Uterus (tissue), 4 donors: ENCODE measurements at regions of chr2 and their contacts with region 1.

Region 1: DNA sequence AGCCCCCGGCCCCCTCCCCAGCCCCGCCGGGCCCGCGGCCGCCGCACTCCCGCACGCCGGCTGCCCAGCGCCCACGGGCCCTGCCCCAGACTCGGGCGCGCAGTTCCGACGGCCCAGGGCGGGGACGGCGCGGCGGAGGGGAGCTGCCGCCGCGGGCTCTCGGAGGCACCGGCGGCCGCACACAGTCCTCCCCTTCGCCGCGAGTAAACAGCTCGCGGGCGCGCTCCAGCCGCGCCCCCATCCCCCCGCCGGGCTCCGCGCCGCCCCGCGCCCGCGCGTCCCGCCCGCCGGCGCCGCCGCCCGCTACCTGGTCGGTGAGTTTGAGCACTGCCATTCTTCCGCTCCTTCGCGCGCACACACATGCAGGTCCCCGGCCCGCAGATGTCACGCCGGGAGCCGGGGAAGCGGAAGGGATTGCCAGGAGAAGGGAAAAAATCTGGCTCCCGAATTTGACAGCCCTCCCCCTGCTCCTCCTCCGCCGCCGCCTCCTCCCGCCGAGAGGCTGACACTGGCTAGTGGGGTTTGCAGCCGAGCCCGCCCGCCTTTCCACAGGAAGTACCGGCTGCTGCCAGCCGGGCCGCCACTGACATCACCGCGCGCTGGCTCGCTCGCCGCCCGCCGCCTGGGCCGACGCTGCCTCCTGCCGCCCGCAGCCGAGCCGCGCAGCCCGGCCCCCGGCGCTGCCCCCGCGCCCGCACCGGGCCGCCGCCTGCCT is at the start of gene ANKRD44:
- DNase-seq: peak; percentile 88
- H3K4me3 ChIP-seq: peak within 1 kb of the TSS; percentile 55 to 74
- H3K27ac ChIP-seq: peak within 1 kb of the TSS; percentile 84 to 90
- H3K4me1 ChIP-seq: peaks cover 0 to 3% of the 10 kb centered on the region in 2 donors
- H3K27me3 ChIP-seq: no peaks in the 10 kb centered on the region
- CTCF ChIP-seq: peak in 3 of 4 experiments; percentile 56 to 95 (median 89)
- POLR2A ChIP-seq: peak; percentile 69 to 76
- total RNA-seq, gene ANKRD44: 14.4 to 71.5 (median 23.2) TPM

Region 2: DNA sequence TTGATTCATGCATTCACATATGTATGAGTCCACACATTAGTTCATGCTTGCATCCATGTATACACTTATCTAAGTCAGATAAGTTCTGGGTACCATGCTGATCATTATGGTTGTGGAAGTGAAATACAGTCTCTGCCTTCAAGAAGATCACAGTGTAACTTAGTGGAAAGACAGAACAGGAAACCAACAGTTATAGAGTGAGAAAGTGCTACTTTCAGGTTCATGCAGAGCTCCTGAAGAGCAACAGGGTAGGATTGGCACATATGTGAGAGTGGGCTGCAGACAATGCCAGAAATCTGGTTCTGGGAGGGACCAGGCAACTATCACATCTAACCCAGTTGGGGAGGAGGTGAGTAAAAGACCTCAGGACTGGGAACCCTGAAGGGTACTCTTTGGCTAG is 348.5 kb before region 1 on chr2:
- intact Hi-C with region 1: no loop called
- DNase-seq: no peak
- H3K4me3 ChIP-seq: no peak overlapping the region
- H3K27ac ChIP-seq: no peak overlapping the region
- H3K4me1 ChIP-seq: no peaks in the 10 kb centered on the region
- H3K27me3 ChIP-seq: no peaks in the 10 kb centered on the region
- CTCF ChIP-seq: no peak
- POLR2A ChIP-seq: no peak

Region 3: GRCh38 chr2:197113275-197113711 is 197.1 kb before region 1 on chr2:
- intact Hi-C with region 1: loop called (anchors 10 kb)
- DNase-seq: no peak
- H3K4me3 ChIP-seq: no peak overlapping the region
- H3K27ac ChIP-seq: no peak overlapping the region
- H3K4me1 ChIP-seq: peaks cover 0 to 4% of the 10 kb centered on the region in 2 donors
- H3K27me3 ChIP-seq: no peaks in the 10 kb centered on the region
- CTCF ChIP-seq: peak; percentile 45 to 59 (median 53)
- POLR2A ChIP-seq: no peak

Region 4: GRCh38 chr2:197124639-197125390 is 185.6 kb before region 1 on chr2:
- intact Hi-C with region 1: no loop called
- DNase-seq: no peak
- H3K4me3 ChIP-seq: no peak overlapping the region
- H3K27ac ChIP-seq: no peak overlapping the region
- H3K4me1 ChIP-seq: no peaks in the 10 kb centered on the region
- H3K27me3 ChIP-seq: no peaks in the 10 kb centered on the region
- CTCF ChIP-seq: no peak
- POLR2A ChIP-seq: no peak

Region 5: DNA sequence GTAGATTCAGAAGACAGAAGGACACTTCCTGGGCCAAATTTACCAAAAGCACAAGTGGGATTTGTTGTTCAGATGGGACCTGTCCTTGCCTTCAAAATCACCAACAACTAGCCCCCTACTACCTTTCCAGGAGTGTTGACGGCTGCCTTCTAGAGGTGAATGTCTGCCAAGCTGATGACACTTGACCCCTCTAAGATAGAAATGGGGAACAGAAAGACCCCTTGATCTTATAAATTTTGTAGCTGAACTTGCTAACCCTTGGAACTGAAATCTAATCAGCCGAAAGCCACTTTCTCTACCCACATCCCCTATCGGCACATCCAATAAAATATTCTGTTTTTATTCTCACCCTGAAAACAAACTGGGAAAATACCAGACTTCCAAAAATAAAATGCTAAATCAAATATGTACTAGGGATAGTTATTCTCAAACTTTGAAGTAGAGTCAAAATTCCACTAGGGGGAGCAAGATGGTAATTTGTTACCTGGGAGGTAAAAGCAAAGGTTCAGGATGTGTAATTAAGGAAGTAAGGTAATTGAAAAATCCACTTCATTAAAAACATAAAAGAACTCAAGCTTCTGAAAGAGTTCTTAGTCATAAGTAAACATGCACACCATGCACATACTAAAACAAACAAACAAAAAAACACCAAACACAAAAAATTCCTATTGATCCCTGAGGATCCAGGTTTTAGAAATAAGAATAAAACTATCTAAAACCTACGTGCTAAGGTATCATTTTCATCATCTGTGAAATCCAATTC is 119.1 kb before region 1 on chr2:
- intact Hi-C with region 1: loop called (anchors 10 kb)
- DNase-seq: no peak
- H3K4me3 ChIP-seq: no peak overlapping the region
- H3K27ac ChIP-seq: no peak overlapping the region
- H3K4me1 ChIP-seq: peaks cover 0 to 7% of the 10 kb centered on the region in 2 donors
- H3K27me3 ChIP-seq: no peaks in the 10 kb centered on the region
- CTCF ChIP-seq: peak; percentile 60 to 64 (median 61)
- POLR2A ChIP-seq: no peak

Region 6: DNA sequence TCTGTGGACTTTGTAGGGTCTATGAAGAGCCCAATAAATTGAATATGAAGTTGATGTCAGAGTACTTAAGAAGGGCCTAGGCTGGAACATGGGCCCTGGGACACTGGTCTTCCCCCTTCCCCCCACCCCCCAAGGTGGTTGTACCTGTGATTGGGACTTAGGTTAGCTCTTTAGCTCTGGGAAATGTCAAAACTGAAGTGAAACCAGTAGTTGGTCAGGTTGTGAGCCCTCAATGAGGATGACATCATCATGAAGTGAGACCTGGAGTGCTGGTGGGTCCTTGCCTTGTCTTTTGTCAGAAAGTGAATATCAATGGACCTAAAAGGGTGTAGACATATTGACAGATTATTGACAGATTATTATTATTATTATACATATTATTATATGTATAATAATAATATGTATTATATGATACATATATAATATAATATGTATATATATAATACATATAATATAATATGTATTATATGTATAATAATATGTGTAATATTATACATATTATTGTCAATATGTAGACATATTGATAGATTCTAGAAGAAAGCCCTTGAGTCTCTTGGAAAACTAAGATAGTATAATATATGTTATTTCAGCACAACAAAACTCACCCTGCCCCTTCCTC is 400.1 kb after region 1 on chr2:
- intact Hi-C with region 1: no loop called
- DNase-seq: no peak
- H3K4me3 ChIP-seq: no peak overlapping the region
- H3K27ac ChIP-seq: no peak overlapping the region
- H3K4me1 ChIP-seq: peaks cover 0 to 6% of the 10 kb centered on the region in 2 donors
- H3K27me3 ChIP-seq: no peaks in the 10 kb centered on the region
- CTCF ChIP-seq: no peak
- POLR2A ChIP-seq: no peak